Panc1 (cell line): ENCODE measurements at regions of chr15 and their contacts with region 1.

Region 1: GRCh38 chr15:85421116-85421925 is 40.9 kb downstream of the AKAP13 start:
- DNase-seq: no peak
- ATAC-seq: no peak
- H3K4me3 ChIP-seq: no peak overlapping the region
- H3K27ac ChIP-seq: no peak overlapping the region
- H3K4me1 ChIP-seq: peaks cover 23% of the 10 kb centered on the region
- H3K27me3 ChIP-seq: no peaks in the 10 kb centered on the region
- CTCF ChIP-seq: no peak

Region 2: DNA sequence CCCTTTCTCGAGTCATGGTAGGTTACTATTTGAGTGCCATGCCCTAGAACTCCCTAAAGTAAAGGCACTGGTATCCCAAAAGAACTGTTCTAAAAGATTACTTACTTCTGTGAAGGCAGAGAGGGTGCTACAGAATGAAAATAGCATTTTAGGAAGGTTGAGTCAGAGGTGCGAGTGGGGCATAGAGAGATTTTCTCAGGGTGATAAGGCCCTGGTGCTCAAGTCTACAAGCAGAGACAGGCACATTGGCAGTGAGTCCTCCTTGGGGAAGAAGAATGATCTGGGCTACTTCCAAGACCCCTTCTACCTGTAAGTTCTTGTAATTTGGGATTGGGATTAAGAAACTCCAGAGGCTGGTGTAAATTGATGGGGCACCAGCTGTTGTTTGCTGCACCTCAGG is 55.7 kb after region 1 on chr15:
- CTCF ChIA-PET with region 1: no interaction called
- POLR2A ChIA-PET with region 1: interaction called, 11 read pairs
- in situ Hi-C with region 1: no loop called
- intact Hi-C with region 1: no loop called
- DNase-seq: no peak
- ATAC-seq: no peak
- H3K4me3 ChIP-seq: no peak overlapping the region
- H3K27ac ChIP-seq: no peak overlapping the region
- H3K4me1 ChIP-seq: peaks cover 34% of the 10 kb centered on the region
- H3K27me3 ChIP-seq: no peaks in the 10 kb centered on the region
- CTCF ChIP-seq: no peak

Region 3: GRCh38 chr15:87401973-87402372 is 1980.7 kb after region 1 on chr15:
- CTCF ChIA-PET with region 1: no interaction called
- POLR2A ChIA-PET with region 1: no interaction called
- in situ Hi-C with region 1: no loop called
- intact Hi-C with region 1: no loop called
- DNase-seq: no peak
- ATAC-seq: no peak
- H3K4me3 ChIP-seq: no peak overlapping the region
- H3K27ac ChIP-seq: no peak overlapping the region
- H3K4me1 ChIP-seq: no peaks in the 10 kb centered on the region
- H3K27me3 ChIP-seq: no peaks in the 10 kb centered on the region
- CTCF ChIP-seq: no peak